ENCODE measurements at regions of chr17 and their contacts with region 1.

Region 1: DNA sequence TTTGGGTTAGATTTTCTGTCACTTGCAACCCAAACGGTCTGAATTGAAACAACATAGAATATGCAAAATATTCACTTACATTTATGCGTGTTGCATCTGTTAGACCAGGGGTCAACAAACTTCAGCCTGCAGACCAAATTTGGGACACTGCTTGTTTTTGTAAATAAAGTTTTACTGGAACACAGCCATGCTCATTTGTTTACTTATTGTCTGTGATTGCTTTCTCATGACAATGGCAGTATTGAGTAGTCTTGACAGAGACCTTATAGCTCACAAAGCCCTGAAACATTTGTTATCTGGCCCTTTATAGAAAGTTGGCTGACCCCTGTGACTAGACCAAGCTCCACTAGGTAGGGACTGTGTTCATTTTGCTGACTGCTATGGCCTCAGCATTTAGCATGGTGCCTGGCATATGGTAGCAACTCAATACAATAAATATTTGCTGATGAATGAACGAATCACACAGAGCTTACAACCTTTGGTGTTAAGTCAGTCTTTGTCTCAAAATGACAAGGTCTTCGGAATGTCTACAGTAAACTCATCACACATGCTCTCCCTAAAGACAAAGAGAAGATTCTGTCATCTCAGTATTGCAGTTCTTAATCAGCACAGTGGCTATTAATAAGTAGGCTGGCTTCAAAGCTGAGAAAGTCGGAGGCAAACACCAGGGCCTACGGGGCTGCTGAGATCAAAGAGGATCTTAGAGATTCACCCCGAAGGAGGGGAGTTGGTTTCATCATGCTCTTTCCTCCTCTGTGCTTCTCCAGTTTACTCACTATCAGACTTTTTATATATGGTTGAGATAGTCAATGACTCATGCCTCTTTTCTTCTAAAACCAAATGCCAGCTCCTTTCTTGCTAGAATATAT is 95.2 kb upstream of the AXIN2 start:
- DNase-seq: peak; percentile 80
- H3K4me3 Mint-ChIP-seq: no peak overlapping the region
- H3K27ac Mint-ChIP-seq: no peak overlapping the region
- H3K4me1 Mint-ChIP-seq: peaks cover 38% of the 10 kb centered on the region
- H3K27me3 Mint-ChIP-seq: no peaks in the 10 kb centered on the region

Region 2: DNA sequence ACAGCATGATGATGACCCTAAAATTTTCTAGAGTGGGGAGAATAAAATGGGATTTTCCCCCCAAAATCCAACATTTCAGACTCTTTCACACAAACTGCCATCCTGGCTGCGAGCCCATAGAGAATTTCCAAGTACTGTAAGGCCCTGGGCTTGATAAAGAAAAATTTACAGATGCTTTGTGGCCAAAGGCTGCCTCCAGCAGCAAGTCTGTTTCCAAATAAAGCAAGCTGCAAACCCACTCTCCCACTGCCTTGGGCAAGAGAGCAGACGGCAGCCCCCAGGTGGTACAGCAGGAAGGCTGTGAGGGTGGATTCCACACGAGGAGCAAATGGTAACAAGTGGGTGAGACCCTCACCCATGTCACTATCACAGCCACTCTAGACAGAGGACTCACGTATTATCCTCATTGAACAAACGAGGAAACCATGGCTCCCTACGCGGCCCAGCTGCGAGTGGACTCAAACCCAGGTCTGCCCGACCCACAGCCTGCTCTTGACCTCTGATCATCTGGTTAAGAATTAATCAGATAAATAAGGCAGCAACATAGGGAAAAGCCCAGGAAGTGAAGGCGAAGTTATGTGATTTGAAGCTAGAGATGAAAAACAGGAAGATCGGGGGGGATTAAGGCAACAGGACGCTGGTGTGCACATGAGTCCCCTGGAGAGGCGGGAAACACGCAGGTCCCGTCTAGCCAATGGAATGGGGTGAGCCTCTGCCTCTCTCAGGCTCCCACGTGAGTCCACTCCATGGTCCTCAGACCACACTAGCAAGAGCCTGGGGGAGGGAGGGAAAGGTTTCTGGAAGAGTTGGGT is 132.6 kb before region 1 on chr17:
- CTCF ChIA-PET with region 1: no interaction called
- POLR2A ChIA-PET with region 1: no interaction called
- intact Hi-C with region 1: loop called (anchors 1 kb)
- DNase-seq: peak; percentile 10
- H3K4me3 Mint-ChIP-seq: no peak overlapping the region
- H3K27ac Mint-ChIP-seq: peak overlapping the region; percentile 57
- H3K4me1 Mint-ChIP-seq: peaks cover 24% of the 10 kb centered on the region
- H3K27me3 Mint-ChIP-seq: no peaks in the 10 kb centered on the region

Region 3: DNA sequence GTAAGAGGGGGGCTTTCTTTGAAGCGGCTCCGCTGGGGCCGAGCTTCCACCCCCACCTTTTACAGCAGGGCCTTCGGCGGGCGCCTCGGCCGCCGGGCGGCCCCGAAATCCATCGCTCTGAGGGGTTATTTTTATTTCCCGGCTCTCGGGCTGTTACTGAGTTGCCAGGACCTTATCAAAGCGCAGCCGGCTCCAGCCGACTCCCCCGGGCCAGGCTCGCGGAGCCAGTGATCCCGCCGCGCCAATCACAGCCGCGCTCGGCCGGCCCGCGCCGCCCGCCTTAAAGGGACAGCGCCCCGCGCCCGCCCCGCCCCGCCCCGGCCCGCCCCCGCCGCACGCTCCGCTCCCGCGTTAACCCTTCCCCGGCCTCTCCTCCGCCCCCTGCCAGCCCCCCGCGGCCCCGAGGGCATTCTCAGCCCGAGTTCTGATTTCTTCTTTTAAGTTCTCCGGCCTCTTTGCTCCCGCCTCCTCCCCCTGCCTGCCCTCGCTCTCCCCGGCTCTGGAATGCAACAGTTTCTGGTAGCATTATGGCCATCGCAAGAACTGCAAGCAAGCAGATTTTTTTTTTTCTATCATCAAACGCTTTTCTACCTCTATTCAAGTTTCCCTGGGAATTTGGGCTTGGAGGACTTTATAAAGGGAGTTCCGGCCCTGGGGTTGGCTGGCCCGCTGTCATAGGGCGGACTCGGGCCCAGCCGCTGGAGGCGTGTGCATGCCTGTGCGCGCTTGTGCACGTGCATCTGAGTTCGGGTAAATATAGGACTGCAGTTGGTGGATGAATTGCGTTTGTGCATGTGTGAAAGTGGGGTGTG is 95.0 kb before region 1 on chr17 and contains the start of gene AXIN2:
- CTCF ChIA-PET with region 1: interaction called, 3 read pairs
- POLR2A ChIA-PET with region 1: no interaction called
- intact Hi-C with region 1: loop called (anchors 1 kb)
- DNase-seq: peak; percentile 91
- H3K4me3 Mint-ChIP-seq: peak within 1 kb of the TSS; percentile 70
- H3K27ac Mint-ChIP-seq: peak within 1 kb of the TSS; percentile 74
- H3K4me1 Mint-ChIP-seq: peaks cover 15% of the 10 kb centered on the region
- H3K27me3 Mint-ChIP-seq: no peaks in the 10 kb centered on the region
- total RNA-seq, gene AXIN2: 3.9 to 4.4 TPM

Region 4: DNA sequence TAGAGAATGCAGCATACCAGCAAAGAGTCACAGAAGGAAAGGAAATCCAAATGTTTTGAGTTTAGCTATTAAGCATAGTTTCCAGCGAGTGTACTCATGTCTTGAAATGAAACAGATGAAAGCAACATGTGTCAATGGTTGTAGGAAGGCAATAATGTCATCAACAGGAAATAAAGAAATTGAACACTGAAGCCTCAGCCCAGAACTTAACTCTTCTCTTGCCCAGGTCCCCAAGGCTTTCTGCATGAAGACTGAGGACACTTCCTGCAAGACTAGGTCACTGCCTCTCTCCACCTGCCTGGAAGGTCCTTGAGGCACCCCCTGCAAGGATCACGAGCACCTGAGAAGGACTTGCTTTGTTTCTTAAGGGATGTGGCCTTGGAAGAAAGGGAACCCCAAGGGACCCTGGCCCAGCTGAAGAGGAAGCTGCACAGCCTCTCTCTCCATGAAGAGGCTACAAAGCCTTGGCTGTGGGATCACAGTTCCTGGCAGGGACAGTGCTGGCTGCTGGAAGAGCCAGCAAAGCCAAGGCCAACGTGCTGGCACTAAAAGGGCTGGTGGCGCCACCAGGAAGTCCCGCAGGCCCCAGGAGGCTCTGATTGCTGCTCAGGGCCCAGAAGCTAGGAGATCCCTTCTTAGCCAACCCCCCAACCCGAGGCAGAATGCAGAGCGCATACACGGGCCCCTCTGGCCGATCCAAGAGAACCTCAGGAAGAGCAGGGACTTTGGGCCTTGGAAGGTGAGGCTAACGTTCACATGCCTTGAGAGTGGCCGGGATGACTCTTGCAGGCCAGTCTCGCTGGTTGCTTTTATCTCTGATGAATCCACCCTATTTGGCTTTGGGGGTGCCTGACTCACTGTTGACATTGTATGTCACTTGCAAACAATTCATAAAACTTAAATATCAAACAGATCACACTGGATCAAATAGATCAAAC is 71.7 kb before region 1 on chr17:
- CTCF ChIA-PET with region 1: no interaction called
- POLR2A ChIA-PET with region 1: no interaction called
- intact Hi-C with region 1: loop called (anchors 1 kb)
- DNase-seq: no peak
- H3K4me3 Mint-ChIP-seq: no peak overlapping the region
- H3K27ac Mint-ChIP-seq: peak overlapping the region; percentile 63
- H3K4me1 Mint-ChIP-seq: peaks cover 15% of the 10 kb centered on the region
- H3K27me3 Mint-ChIP-seq: no peaks in the 10 kb centered on the region

Region 5: DNA sequence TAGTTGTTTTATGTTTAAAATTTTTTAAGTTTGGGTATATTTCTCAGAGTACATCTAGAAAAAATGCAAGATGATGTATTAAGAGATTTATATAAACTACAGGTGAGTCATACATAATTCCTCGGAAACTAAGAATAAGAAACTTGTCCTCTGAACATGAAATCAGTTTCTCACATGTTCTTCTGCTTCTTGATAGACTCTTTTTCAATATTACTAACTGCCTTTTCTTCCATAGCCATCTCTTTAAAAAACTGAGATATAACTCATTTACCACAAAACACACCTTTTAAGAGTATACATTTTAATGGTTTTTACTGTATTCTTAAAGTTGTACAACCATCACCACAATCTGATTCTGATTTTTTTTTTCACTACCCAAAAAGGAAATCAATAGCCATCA is 143.3 kb after region 1 on chr17:
- CTCF ChIA-PET with region 1: interaction called, 3 read pairs
- POLR2A ChIA-PET with region 1: no interaction called
- intact Hi-C with region 1: loop called (anchors 1 kb)
- DNase-seq: no peak
- H3K4me3 Mint-ChIP-seq: no peak overlapping the region
- H3K27ac Mint-ChIP-seq: peak overlapping the region; percentile 82
- H3K4me1 Mint-ChIP-seq: peaks cover 26% of the 10 kb centered on the region
- H3K27me3 Mint-ChIP-seq: no peaks in the 10 kb centered on the region

Region 6: GRCh38 chr17:65914784-65915350 is 258.3 kb after region 1 on chr17:
- CTCF ChIA-PET with region 1: no interaction called
- POLR2A ChIA-PET with region 1: no interaction called
- intact Hi-C with region 1: loop called (anchors 10 kb)
- DNase-seq: peak; percentile 49
- H3K4me3 Mint-ChIP-seq: no peak overlapping the region
- H3K27ac Mint-ChIP-seq: peak overlapping the region; percentile 61
- H3K4me1 Mint-ChIP-seq: peaks cover 16% of the 10 kb centered on the region
- H3K27me3 Mint-ChIP-seq: no peaks in the 10 kb centered on the region

Measured in activated CD4-positive, alpha-beta memory T cell treated with anti-CD3 and anti-CD28 coated beads for 36 hours (primary cell).